ENCODE measurements at regions of chr12 and their contacts with region 1.

Region 1: GRCh38 chr12:32737715-32738114 is 18.0 kb downstream of the YARS2 start:
- DNase-seq: no peak

Region 2: DNA sequence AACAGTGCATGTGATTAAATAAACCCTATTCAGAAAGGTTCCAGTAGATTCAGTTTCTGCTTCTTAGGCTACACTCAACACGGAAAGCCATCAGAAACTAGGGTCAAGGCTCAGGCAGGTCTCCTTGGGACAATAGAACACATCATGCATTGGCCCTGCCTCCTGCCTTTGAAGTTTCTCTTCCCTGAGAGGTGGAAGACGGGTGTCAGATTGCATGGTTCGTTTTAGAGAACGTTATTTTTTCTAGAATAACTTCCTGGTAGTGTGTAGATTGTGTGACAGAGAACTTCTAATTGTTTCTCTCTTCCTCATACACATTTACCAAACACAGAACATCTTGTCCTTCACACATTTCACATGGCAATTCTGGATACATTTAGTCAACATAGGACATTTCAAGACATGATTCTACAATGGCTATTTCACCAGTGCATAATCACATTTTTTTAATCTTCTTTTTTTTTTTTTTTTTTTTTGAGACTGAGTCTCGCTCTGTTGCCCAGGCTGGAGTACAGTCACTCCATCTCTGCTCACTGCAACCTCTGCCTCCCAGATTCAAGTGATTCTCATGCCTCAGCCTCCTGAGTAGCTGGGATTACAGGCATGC is 902.3 kb before region 1 on chr12:
- intact Hi-C with region 1: loop called in 1 of 2 experiments (anchors 5 kb)
- DNase-seq: no peak

Region 3: GRCh38 chr12:32718926-32719325 is 18.8 kb before region 1 on chr12:
- intact Hi-C with region 1: loop called in 1 of 2 experiments (anchors 2 kb)
- DNase-seq: no peak

Region 4: GRCh38 chr12:32896432-32897273 is 158.9 kb after region 1 on chr12 and contains the start of gene PKP2:
- intact Hi-C with region 1: no loop called
- DNase-seq: peak; percentile 82
- total RNA-seq, gene PKP2: 0.38 to 3.6 TPM

Measured in posterior vena cava (tissue), 2 donors.